Mammary epithelial cell (primary cell): ENCODE measurements at regions of chr11 and their contacts with region 1.

Region 1: DNA sequence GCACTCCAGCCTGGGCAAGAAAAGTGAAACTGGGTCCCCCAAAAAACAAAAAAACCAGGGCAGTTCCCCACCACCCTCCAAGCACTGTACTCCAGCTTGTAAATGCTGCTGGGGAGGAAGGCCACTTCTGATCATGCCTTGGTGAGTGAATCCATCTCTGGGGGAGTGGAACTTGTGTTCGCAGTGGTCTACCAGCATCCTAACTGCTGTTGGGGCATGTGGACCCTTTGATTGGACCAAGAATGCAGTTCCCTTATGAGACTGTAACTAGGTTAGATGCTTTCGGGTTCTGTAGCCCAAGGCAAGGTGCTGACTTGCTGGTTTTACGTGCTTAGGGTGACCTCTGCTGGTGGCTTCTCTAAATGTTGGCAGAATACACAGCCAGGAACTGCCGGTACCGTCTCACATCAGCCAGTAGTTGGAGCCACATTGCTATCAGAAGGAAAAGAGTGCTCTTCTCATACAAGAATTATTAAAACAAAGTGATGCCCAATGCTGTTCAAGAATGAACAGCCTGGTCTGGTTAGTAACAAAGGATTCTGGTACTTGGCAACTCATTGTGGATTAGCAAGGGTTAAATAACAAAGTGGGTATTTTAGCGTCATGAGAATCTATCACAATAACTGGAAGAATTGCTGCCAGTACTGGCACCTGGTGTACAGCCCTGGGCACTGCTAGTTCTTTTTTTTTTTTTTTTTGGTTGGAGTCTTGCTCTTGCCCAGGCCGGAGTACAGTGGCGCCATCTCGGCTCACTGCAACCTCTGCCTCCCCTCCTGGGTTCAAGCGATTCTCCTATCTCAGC is 13.0 kb downstream of the EIF1AD start:
- DNase-seq: peak; percentile 87
- H3K4me3 ChIP-seq: no peak overlapping the region
- H3K27ac ChIP-seq: no peak overlapping the region
- H3K4me1 ChIP-seq: no peaks in the 10 kb centered on the region
- H3K27me3 ChIP-seq: no peaks in the 10 kb centered on the region
- CTCF ChIP-seq: peak; percentile 87 to 100

Region 2: DNA sequence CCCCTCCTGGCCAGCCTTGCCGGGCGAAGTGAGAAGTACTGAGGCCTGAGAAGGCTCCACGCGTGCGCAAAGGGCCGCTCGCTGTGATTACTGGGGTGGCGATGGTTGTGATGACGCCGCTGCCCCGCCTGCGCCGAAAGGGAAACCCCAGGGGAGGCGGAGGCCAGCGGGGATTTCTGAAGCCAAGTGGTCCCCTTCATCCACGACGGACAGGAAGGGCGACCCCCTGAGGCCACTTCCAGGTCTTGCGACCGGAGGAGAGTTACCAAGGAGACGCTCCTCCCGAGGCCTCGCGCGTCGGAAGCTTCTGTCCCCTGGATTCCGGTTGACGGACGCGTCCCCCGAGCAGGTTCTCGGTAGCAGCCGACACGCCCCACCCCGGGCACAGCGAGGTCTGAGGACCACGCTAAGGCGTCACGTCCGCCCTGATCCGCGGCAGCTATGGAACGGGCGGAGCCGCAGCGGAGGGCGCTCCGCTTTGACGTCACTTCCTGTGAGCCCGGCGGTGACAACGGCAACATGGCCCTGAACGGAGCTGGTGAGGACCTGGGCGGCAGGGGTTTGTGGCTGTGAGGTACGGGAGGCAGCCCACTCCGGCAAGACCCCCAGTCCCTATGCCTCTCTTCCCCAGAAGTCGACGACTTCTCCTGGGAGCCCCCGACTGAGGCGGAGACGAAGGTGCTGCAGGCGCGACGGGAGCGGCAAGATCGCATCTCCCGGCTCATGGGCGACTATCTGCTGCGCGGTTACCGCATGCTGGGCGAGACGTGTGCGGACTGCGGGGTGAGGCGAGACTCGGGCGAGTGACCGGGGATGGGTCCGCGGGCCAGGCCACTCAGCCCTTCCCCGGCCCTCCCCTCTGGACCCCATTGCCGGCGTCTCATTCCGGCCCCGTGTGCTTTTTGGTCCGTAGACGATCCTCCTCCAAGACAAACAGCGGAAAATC is 418.7 kb before region 1 on chr11 and contains the start of gene ZNRD2:
- CTCF ChIA-PET with region 1: no interaction called
- dilution Hi-C with region 1: no loop called
- in situ Hi-C with region 1: no loop called
- intact Hi-C with region 1: loop called (anchors 2 kb)
- DNase-seq: peak; percentile 99
- H3K4me3 ChIP-seq: peak within 1 kb of the TSS; percentile 60 to 97 (median 91)
- H3K27ac ChIP-seq: peak within 1 kb of the TSS; percentile 81
- H3K4me1 ChIP-seq: peaks cover 56% of the 10 kb centered on the region
- H3K27me3 ChIP-seq: no peaks in the 10 kb centered on the region
- CTCF ChIP-seq: peak; percentile 47 to 48
- total RNA-seq, gene ZNRD2: 35.2 to 52.8 TPM

Region 3: DNA sequence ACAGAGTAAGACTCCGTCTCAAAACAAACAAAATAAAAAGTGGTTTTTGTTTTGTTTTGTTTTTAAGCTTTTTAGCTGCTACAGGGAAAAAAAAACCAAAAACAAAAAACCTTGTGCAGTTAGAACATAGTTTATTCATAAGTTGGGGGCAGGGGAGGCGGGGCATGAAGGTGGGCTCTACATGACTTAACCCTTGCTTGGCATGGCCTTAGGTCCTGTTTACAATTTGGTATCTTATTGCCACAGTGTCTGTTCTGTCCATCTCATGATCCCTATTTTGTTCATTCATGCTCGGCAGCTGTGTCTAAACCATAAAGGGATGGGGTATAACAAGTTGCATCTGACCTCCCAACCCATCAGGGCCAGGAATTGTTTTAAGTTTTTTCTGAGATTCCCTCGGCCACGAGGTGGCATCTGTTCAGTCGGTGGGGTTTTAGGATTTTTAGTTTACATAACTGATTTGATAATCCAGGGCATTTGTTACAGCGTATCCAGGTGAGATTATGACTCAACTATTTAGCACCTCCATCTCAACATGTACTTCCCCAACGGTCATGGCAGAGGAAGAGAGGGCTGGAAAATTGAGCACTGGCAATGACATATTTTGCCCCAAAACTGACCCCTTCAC is 215.1 kb before region 1 on chr11:
- CTCF ChIA-PET with region 1: no interaction called
- dilution Hi-C with region 1: no loop called
- in situ Hi-C with region 1: no loop called
- intact Hi-C with region 1: loop called (anchors 1 kb)
- DNase-seq: peak; percentile 38
- H3K4me3 ChIP-seq: no peak overlapping the region
- H3K27ac ChIP-seq: no peak overlapping the region
- H3K4me1 ChIP-seq: peaks cover 15% of the 10 kb centered on the region
- H3K27me3 ChIP-seq: no peaks in the 10 kb centered on the region
- CTCF ChIP-seq: peak; percentile 19 to 37

Region 4: DNA sequence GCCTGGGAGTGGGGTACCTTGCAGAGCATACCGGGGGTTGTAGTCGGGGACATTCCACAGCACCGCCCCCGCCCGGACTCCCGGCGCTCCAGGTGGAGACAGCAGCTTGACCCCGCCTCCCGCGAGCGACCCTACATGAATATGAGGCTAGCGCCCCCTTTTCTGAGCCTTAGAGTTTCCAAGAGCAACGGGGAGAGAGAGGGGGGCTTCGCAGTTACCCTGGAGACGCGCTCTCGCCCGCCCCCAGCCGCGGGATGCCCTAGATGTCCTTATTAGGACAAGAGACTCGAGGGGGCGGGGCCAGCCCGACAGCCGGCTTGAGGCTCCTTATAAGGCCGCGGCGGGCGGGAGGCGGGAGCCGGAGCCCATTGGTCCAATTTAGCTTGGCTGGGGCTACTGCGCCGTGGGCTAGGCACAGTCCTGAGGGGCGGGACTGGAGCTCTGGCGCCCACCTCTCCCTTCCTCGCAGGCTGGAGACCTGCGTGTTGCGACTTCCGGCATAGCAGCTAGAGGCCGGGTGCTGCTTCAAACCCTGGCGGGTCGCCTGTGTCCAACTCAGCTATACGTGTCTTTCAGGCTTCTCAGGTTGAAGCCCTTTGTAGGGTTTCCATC is 129.7 kb before region 1 on chr11:
- CTCF ChIA-PET with region 1: interaction called, 3 read pairs
- dilution Hi-C with region 1: no loop called
- in situ Hi-C with region 1: no loop called
- intact Hi-C with region 1: loop called (anchors 1 kb)
- DNase-seq: peak; percentile 93
- H3K4me3 ChIP-seq: peak overlapping the region; percentile 76 to 97 (median 84)
- H3K27ac ChIP-seq: peak overlapping the region; percentile 70
- H3K4me1 ChIP-seq: peaks cover 35% of the 10 kb centered on the region
- H3K27me3 ChIP-seq: no peaks in the 10 kb centered on the region
- CTCF ChIP-seq: no peak

Region 5: GRCh38 chr11:65900125-65900898 is 88.7 kb before region 1 on chr11 and contains the start of gene FOSL1:
- CTCF ChIA-PET with region 1: no interaction called
- dilution Hi-C with region 1: loop called (anchors 5 kb)
- in situ Hi-C with region 1: no loop called
- intact Hi-C with region 1: no loop called
- DNase-seq: peak; percentile 99
- H3K4me3 ChIP-seq: peak within 1 kb of the TSS; percentile 68 to 88 (median 83)
- H3K27ac ChIP-seq: peak within 1 kb of the TSS; percentile 86
- H3K4me1 ChIP-seq: peaks cover 58% of the 10 kb centered on the region
- H3K27me3 ChIP-seq: no peaks in the 10 kb centered on the region
- CTCF ChIP-seq: no peak
- total RNA-seq, gene FOSL1: 12.5 to 275 TPM

Region 6: DNA sequence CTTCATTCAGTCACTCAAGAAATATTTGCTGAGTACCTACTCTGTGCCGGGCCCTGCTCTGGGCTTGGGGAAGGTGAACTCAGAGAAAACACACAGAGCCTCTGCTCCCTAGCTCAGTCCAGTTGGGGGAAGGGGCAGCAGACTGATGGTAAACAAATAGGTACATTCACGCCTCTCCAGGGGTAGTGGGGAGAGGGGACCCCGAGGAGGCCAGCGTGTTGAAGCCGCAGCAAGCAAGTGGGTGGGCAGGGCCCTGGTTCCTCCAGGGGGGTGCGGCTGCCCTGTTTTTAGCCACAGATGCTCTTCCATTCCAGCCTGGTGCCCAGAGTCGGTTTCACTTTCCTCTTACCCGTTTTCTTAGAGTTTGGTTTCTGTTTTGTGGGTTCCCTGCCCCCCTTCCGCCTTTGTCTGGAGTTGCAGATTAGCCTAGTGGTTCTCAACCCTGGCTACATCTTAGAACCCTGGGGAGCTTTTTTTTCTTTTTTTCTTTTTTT is 61.0 kb before region 1 on chr11:
- CTCF ChIA-PET with region 1: no interaction called
- dilution Hi-C with region 1: no loop called
- in situ Hi-C with region 1: no loop called
- intact Hi-C with region 1: no loop called
- DNase-seq: no peak
- H3K4me3 ChIP-seq: no peak overlapping the region
- H3K27ac ChIP-seq: no peak overlapping the region
- H3K4me1 ChIP-seq: no peaks in the 10 kb centered on the region
- H3K27me3 ChIP-seq: no peaks in the 10 kb centered on the region
- CTCF ChIP-seq: no peak

Region 7: GRCh38 chr11:65941720-65942310 is 47.2 kb before region 1 on chr11:
- CTCF ChIA-PET with region 1: no interaction called
- dilution Hi-C with region 1: loop called (anchors 5 kb)
- in situ Hi-C with region 1: no loop called
- intact Hi-C with region 1: no loop called
- DNase-seq: no peak
- H3K4me3 ChIP-seq: no peak overlapping the region
- H3K27ac ChIP-seq: no peak overlapping the region
- H3K4me1 ChIP-seq: peaks cover 12% of the 10 kb centered on the region
- H3K27me3 ChIP-seq: no peaks in the 10 kb centered on the region
- CTCF ChIP-seq: no peak

Region 8: GRCh38 chr11:66022401-66023185 is 33.6 kb after region 1 on chr11:
- CTCF ChIA-PET with region 1: no interaction called
- dilution Hi-C with region 1: no loop called
- in situ Hi-C with region 1: no loop called
- intact Hi-C with region 1: loop called (anchors 1 kb)
- DNase-seq: peak; percentile 43
- H3K4me3 ChIP-seq: peak overlapping the region in 1 of 3 experiments; percentile 9
- H3K27ac ChIP-seq: no peak overlapping the region
- H3K4me1 ChIP-seq: peaks cover 17% of the 10 kb centered on the region
- H3K27me3 ChIP-seq: no peaks in the 10 kb centered on the region
- CTCF ChIP-seq: peak; percentile 79 to 92